Left colon (tissue), 2 donors: ENCODE measurements at regions of chr9 and their contacts with region 1.

Region 1: GRCh38 chr9:4077499-4078102 is 222.3 kb downstream of the GLIS3 start:
- DNase-seq: peak; percentile 80 to 91
- ATAC-seq: peak; percentile 95

Region 2: DNA sequence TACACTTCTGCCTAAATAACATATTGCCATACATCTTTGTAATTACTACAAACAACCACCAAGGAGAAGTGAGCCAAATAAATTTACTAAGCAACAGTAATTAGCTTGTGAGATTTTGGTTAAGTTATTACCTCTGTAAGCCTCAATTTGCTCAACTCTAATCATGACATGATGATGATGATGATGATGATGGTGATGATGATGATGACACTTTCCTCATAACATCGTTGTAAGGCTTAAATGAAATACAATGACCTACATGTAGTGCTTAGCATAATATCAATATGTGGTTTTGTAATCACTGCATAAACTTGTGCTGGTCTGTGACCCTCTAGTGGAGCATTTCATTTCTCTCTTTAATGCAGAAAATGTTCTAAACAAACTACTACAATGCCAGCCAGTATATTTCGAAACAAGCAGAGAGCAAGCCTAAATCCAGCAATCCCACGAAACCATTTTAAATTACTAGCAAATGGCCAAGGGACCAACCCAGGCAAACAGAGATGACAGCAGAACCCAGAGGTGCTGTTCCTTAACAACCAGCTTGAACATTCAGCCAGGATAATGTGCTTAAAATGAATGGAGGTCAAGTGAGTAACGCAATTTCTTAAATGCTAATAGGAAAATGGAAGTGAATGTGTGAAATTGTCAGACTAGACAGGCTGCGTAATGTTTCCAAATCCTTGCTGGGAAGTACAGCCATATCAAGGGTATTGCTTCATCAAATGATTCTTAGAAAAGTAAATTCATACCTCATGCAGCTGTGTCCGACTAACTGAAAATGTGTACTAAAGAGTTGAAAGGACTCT is 951.8 kb before region 1 on chr9:
- intact Hi-C with region 1: no loop called
- DNase-seq: no peak
- ATAC-seq: no peak

Region 3: GRCh38 chr9:4143936-4144717 is 66.5 kb after region 1 on chr9:
- intact Hi-C with region 1: no loop called
- DNase-seq: no peak
- ATAC-seq: no peak

Region 4: DNA sequence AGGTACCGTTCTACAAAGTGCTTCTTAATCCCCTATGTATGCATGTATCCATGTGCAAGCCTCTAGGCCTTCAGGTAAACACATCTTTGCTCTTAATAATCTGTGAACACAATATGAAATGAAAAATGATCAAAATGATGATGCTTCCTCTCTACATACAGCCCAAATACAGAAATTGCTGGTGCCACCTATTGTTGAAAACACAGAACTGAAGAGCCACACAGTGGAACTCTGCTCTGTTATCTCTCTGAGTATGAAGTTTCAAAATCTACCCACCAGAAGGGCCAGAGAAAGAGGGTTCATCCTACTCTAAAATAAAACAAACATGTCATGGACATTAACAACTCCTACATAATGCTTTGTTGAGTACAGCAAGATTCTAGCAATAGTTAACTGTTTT is 151.0 kb after region 1 on chr9:
- intact Hi-C with region 1: loop called in 1 of 2 experiments (anchors 10 kb)
- DNase-seq: no peak
- ATAC-seq: peak; percentile 70